ENCODE measurements at regions of chr21 and their contacts with region 1.

Region 1: DNA sequence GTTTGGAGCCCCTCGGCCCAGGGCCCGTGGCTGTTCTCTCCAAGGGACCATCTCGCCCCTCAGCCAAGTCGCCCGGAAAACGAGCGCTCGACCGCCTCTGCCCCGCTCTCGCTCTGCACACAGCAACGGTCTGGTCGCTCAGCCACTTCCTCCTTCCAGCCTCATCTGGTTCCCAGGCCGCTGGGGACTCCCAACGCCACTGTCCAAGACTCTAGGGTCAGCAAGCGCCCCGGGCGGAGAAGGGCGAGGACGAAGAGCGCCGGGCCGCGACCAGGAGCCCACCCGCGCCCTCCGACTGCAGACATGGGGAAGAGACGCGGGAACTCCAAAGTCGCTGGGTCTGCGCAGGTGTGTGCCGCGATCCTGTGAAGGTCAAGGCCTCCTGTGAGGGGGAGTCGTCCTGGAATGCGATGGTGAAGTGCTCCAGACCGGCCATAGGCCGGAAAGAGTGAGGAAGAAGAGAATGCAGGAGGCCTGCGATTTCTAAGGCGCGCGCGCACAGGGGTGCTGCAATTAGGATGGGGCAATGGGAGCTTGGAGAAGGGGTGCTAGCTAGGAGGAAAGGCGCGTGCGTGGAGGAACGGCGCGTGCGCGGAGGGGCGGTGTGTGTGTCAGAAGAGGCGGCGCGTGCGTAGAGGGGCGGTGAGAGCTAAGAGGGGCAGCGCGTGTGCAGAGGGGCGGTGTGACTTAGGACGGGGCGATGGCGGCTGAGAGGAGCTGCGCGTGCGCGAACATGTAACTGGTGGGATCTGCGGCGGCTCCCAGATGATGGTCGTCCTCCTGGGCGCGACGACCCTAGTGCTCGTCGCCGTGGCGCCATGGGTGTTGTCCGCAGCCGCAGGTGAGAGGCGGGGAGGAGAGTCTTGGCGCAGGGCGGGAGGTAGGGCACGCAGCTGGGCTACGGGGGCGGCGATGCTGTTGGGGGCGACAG is at the start of gene IFNAR1:
- DNase-seq: peak; percentile 98
- H3K4me3 Mint-ChIP-seq: no peak within 1 kb of the TSS
- H3K27ac Mint-ChIP-seq: no peak within 1 kb of the TSS
- H3K4me1 Mint-ChIP-seq: peaks cover 23% of the 10 kb centered on the region
- H3K27me3 Mint-ChIP-seq: peaks cover 6% of the 10 kb centered on the region
- total RNA-seq, gene IFNAR1: 20.4 and 20.7 TPM in 2 replicates

Region 2: GRCh38 chr21:33229784-33230544 is 94.6 kb before region 1 on chr21 and contains the start of gene IFNAR2:
- intact Hi-C with region 1: loop called (anchors 1 kb)
- DNase-seq: peak; percentile 68
- H3K4me3 Mint-ChIP-seq: peak within 1 kb of the TSS; percentile 88
- H3K27ac Mint-ChIP-seq: peak within 1 kb of the TSS; percentile 87
- H3K4me1 Mint-ChIP-seq: peaks cover 49% of the 10 kb centered on the region
- H3K27me3 Mint-ChIP-seq: peaks cover 5% of the 10 kb centered on the region
- total RNA-seq, gene IFNAR2: 33.3 and 33.5 TPM in 2 replicates

Region 3: GRCh38 chr21:33266050-33266788 is 58.3 kb before region 1 on chr21 and contains the start of gene IL10RB:
- intact Hi-C with region 1: loop called (anchors 1 kb)
- DNase-seq: peak; percentile 66
- H3K4me3 Mint-ChIP-seq: peak within 1 kb of the TSS; percentile 97
- H3K27ac Mint-ChIP-seq: peak within 1 kb of the TSS; percentile 92
- H3K4me1 Mint-ChIP-seq: peaks cover 33% of the 10 kb centered on the region
- H3K27me3 Mint-ChIP-seq: no peaks in the 10 kb centered on the region
- total RNA-seq, gene IL10RB: 20.5 and 21.4 TPM in 2 replicates

Region 4: GRCh38 chr21:33403779-33404585 is 79.4 kb after region 1 on chr21:
- intact Hi-C with region 1: loop called (anchors 2 kb)
- DNase-seq: no peak
- H3K4me3 Mint-ChIP-seq: peak overlapping the region; percentile 83
- H3K27ac Mint-ChIP-seq: peak overlapping the region; percentile 61
- H3K4me1 Mint-ChIP-seq: peaks cover 34% of the 10 kb centered on the region
- H3K27me3 Mint-ChIP-seq: peaks cover 74% of the 10 kb centered on the region

Region 5: DNA sequence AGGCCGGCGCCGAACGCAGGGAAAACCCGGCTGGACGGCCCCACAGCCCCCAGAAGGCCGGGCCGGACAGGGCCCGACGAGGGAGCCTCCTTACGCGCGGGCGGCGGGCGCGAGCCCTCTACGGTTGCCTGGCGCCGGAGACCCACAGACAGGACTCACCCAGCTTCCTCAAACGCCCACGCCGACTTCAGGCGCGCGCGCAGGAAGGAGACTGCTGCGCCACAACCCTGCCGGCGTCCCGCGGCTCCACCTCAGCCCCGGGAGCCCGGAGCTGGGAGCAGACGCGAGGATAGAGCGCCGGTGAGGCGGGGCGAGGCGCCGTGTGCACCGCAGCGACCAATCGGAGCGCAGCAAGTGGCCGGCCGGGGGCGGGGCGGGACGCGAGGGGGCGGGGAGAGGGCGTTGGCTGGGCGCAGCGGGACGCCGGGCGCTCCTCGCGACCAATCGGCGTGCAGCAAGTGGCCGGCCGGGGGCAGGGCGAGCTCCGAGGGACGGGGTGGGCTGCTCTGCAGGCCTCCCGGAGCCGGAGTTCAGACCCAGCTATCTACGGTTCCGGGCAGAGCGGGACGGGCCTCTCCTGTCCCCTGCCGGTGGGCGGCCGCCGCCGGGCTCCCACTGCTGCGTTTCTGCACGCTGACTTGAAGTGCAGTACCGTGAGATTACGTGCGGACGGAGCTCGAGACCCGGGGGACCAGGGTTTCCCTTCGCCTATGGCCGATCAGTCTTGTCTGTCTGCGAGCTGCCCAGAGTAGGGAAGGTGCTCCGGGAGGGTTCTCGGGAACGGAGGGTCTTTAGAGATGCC is 155.3 kb after region 1 on chr21 and contains the start of gene TMEM50B:
- intact Hi-C with region 1: loop called (anchors 1 kb)
- DNase-seq: peak; percentile 93
- H3K4me3 Mint-ChIP-seq: peak within 1 kb of the TSS; percentile 88
- H3K27ac Mint-ChIP-seq: peak within 1 kb of the TSS; percentile 84
- H3K4me1 Mint-ChIP-seq: peaks cover 23% of the 10 kb centered on the region
- H3K27me3 Mint-ChIP-seq: peaks cover 6% of the 10 kb centered on the region
- total RNA-seq, gene TMEM50B: 12.0 and 14.0 TPM in 2 replicates

Region 6: DNA sequence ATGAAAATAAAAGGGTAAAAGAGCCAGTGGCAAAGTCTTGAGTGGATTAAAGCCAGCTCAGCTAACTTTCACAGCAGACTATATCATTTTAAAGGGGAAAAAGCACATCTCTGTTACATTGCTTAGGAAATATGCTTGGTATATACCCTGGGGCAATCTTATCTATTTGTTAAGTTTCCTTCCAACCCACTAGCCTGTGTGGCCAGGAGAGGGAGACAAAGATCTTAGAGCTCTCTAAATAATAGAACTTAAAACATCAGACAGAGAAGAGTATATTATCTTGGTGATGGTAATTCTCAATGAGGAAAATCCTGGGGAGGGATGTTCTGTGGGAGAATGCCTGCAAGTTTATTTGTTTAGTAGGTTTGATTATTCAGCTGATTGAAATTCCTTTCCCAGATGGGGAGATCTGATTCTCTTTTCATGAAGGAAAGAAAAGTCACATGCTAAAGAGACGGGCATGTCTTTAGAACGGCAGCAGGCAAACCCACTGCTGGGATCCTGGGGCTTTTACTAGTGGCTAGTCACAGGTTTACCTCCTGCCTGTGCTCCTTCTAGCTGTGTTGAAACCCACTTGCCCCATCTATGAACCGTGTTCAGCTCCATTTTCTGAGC is 1042.9 kb after region 1 on chr21:
- intact Hi-C with region 1: no loop called
- DNase-seq: peak; percentile 9
- H3K4me3 Mint-ChIP-seq: no peak overlapping the region
- H3K27ac Mint-ChIP-seq: no peak overlapping the region
- H3K4me1 Mint-ChIP-seq: no peaks in the 10 kb centered on the region
- H3K27me3 Mint-ChIP-seq: peaks cover 18% of the 10 kb centered on the region